CD4-positive, alpha-beta memory T cell (primary cell): ENCODE measurements at regions of chr22 and their contacts with region 1.

Region 1: GRCh38 chr22:40645579-40646197 is 9.2 kb upstream of the MRTFA start:
- DNase-seq: no peak
- H3K4me3 ChIP-seq: no peak overlapping the region
- H3K4me3 Mint-ChIP-seq: peak overlapping the region in 1 of 8 donors; percentile 65
- H3K27ac ChIP-seq: no peak overlapping the region
- H3K27ac Mint-ChIP-seq: peak overlapping the region in 1 of 7 donors; percentile 27
- H3K4me1 ChIP-seq: peaks cover 7% of the 10 kb centered on the region
- H3K4me1 Mint-ChIP-seq: peaks cover 6 to 12% (median 7%) of the 10 kb centered on the region in 4 donors
- H3K27me3 ChIP-seq: no peaks in the 10 kb centered on the region
- H3K27me3 Mint-ChIP-seq: no peaks in the 10 kb centered on the region

Region 2: DNA sequence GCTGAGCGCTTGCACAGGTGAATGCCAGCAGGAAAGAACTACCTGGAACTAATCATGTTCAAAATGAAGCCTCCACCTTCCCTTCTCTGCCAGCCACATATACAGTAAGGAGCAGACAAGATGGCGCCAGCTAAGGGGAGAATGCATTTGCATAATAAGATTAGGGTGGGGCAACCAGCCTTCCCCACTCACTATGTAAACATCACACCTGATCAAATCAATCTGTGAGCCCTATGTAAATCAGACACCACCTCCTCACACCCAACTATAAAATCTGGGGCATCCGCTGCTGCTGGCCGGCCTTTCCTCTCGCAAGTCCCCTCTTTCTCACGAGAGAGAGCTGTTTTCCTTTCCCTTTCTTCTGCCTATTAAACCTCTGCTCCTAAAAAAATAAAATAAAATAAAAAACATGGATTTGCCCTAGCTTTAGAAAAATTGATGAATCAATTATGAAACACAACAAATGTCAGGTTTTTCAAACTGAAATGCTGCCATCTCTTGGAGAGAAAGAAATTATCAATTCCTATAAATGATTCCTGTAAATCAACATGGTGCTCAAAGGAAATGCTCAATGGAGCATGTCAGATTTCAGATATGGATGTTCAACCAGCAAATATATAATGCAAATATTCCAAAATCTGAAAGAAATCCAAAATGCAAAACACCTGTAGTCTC is 166.4 kb before region 1 on chr22:
- CTCF ChIA-PET with region 1: interaction called, 11 read pairs
- POLR2A ChIA-PET with region 1: no interaction called
- intact Hi-C with region 1: no loop called
- DNase-seq: no peak
- H3K4me3 ChIP-seq: no peak overlapping the region
- H3K4me3 Mint-ChIP-seq: no peak overlapping the region
- H3K27ac ChIP-seq: no peak overlapping the region
- H3K27ac Mint-ChIP-seq: no peak overlapping the region
- H3K4me1 ChIP-seq: peaks cover 28% of the 10 kb centered on the region
- H3K4me1 Mint-ChIP-seq: peaks cover 14 to 39% (median 24%) of the 10 kb centered on the region in 4 donors
- H3K27me3 ChIP-seq: no peaks in the 10 kb centered on the region
- H3K27me3 Mint-ChIP-seq: no peaks in the 10 kb centered on the region

Region 3: DNA sequence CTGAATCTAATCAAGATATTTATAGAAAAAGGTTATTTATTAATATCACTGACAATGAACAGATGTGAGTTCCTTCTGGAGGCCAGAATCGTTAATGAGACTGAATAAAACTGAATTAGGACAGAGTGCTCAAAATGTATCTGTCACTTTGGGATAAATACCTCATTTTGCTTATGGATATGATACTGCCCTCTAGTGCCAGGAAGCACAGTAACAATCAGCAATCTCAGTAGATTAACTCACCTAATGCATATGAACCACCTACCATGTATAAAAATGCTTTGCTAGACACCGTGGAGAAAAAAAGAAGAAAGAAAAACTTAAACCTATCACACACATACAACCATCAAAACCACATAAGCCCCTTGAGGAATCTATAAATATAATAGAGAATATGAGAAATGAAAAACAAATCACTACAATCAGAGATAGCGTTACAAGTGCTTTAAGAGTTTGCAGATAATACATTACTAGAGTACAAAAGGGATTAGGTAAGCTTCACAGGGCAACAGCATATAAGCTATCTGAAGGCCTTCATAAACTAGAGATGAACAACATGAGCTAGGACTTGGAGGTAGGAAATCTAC is 157.9 kb before region 1 on chr22:
- CTCF ChIA-PET with region 1: interaction called, 30 read pairs
- POLR2A ChIA-PET with region 1: no interaction called
- intact Hi-C with region 1: loop called (anchors 1 kb)
- DNase-seq: peak in 4 of 5 donors; percentile 33 to 45 (median 42)
- H3K4me3 ChIP-seq: no peak overlapping the region
- H3K4me3 Mint-ChIP-seq: no peak overlapping the region
- H3K27ac ChIP-seq: no peak overlapping the region
- H3K27ac Mint-ChIP-seq: peak overlapping the region in 2 of 7 donors; percentile 7 to 48
- H3K4me1 ChIP-seq: peaks cover 30% of the 10 kb centered on the region
- H3K4me1 Mint-ChIP-seq: peaks cover 26 to 34% (median 33%) of the 10 kb centered on the region in 4 donors
- H3K27me3 ChIP-seq: no peaks in the 10 kb centered on the region
- H3K27me3 Mint-ChIP-seq: no peaks in the 10 kb centered on the region

Region 4: DNA sequence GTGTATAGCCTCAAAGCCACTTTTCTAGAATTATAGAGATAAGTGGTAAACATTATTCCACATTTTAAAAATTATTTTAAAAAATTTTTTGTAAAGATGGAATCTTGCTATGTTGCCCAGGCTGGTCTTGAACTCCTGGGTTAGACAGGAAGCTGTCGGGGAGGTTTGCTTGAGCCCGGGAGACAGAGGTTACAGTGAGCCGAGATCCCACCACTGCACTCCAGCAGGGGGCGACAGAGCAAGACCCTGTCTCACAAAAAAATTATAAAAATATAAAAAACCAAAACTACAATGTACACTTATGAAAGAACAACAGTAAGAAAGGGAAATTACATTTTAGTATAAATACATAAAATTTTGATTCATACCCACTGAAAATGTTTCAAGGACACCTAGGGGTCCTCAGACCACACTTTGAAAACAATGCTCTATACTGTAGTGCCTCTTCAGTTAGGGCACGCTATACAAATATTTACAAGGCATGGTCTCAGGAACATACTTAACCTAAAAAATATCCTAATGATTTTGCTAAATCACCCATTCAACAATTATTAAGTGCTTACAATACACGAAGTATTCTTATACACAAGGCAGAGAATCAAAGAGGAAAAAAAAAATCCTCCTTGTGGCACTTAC is 120.3 kb before region 1 on chr22:
- CTCF ChIA-PET with region 1: interaction called, 172 read pairs
- POLR2A ChIA-PET with region 1: interaction called, 7 read pairs
- intact Hi-C with region 1: loop called (anchors 1 kb)
- DNase-seq: peak; percentile 68 to 73 (median 69)
- H3K4me3 ChIP-seq: no peak overlapping the region
- H3K4me3 Mint-ChIP-seq: no peak overlapping the region
- H3K27ac ChIP-seq: no peak overlapping the region
- H3K27ac Mint-ChIP-seq: peak overlapping the region in 5 of 7 donors; percentile 16 to 87 (median 63)
- H3K4me1 ChIP-seq: peaks cover 22% of the 10 kb centered on the region
- H3K4me1 Mint-ChIP-seq: peaks cover 23 to 46% (median 31%) of the 10 kb centered on the region in 4 donors
- H3K27me3 ChIP-seq: no peaks in the 10 kb centered on the region
- H3K27me3 Mint-ChIP-seq: no peaks in the 10 kb centered on the region

Region 5: GRCh38 chr22:40533712-40534378 is 111.8 kb before region 1 on chr22:
- CTCF ChIA-PET with region 1: interaction called, 92 read pairs
- POLR2A ChIA-PET with region 1: interaction called, 7 read pairs
- intact Hi-C with region 1: loop called (anchors 2 kb)
- DNase-seq: peak; percentile 71 to 83 (median 77)
- H3K4me3 ChIP-seq: peak overlapping the region; percentile 32 to 61
- H3K4me3 Mint-ChIP-seq: peak overlapping the region; percentile 81 to 93 (median 87)
- H3K27ac ChIP-seq: peak overlapping the region; percentile 50
- H3K27ac Mint-ChIP-seq: peak overlapping the region; percentile 86 to 94 (median 92)
- H3K4me1 ChIP-seq: peaks cover 67% of the 10 kb centered on the region
- H3K4me1 Mint-ChIP-seq: peaks cover 49 to 64% (median 60%) of the 10 kb centered on the region in 4 donors
- H3K27me3 ChIP-seq: no peaks in the 10 kb centered on the region
- H3K27me3 Mint-ChIP-seq: no peaks in the 10 kb centered on the region

Region 6: GRCh38 chr22:40610329-40610850 is 35.3 kb before region 1 on chr22:
- CTCF ChIA-PET with region 1: interaction called, 13 read pairs
- POLR2A ChIA-PET with region 1: no interaction called
- intact Hi-C with region 1: no loop called
- DNase-seq: no peak
- H3K4me3 ChIP-seq: no peak overlapping the region
- H3K4me3 Mint-ChIP-seq: no peak overlapping the region
- H3K27ac ChIP-seq: no peak overlapping the region
- H3K27ac Mint-ChIP-seq: peak overlapping the region in 2 of 7 donors; percentile 22 to 29
- H3K4me1 ChIP-seq: peaks cover 22% of the 10 kb centered on the region
- H3K4me1 Mint-ChIP-seq: peaks cover 30 to 58% (median 42%) of the 10 kb centered on the region in 4 donors
- H3K27me3 ChIP-seq: no peaks in the 10 kb centered on the region
- H3K27me3 Mint-ChIP-seq: no peaks in the 10 kb centered on the region

Region 7: GRCh38 chr22:40721266-40721665 is 75.6 kb after region 1 on chr22:
- CTCF ChIA-PET with region 1: no interaction called
- POLR2A ChIA-PET with region 1: no interaction called
- intact Hi-C with region 1: no loop called
- DNase-seq: no peak
- H3K4me3 ChIP-seq: no peak overlapping the region
- H3K4me3 Mint-ChIP-seq: no peak overlapping the region
- H3K27ac ChIP-seq: no peak overlapping the region
- H3K27ac Mint-ChIP-seq: peak overlapping the region in 1 of 7 donors; percentile 43
- H3K4me1 ChIP-seq: peaks cover 4% of the 10 kb centered on the region
- H3K4me1 Mint-ChIP-seq: peaks cover 5 to 12% (median 11%) of the 10 kb centered on the region in 4 donors
- H3K27me3 ChIP-seq: no peaks in the 10 kb centered on the region
- H3K27me3 Mint-ChIP-seq: no peaks in the 10 kb centered on the region

Region 8: GRCh38 chr22:40757071-40757470 is 111.4 kb after region 1 on chr22:
- CTCF ChIA-PET with region 1: interaction called, 10 read pairs
- POLR2A ChIA-PET with region 1: no interaction called
- intact Hi-C with region 1: no loop called
- DNase-seq: no peak
- H3K4me3 ChIP-seq: no peak overlapping the region
- H3K4me3 Mint-ChIP-seq: no peak overlapping the region
- H3K27ac ChIP-seq: no peak overlapping the region
- H3K27ac Mint-ChIP-seq: no peak overlapping the region
- H3K4me1 ChIP-seq: no peaks in the 10 kb centered on the region
- H3K4me1 Mint-ChIP-seq: peaks cover 0 to 1% (median 0%) of the 10 kb centered on the region in 4 donors
- H3K27me3 ChIP-seq: no peaks in the 10 kb centered on the region
- H3K27me3 Mint-ChIP-seq: no peaks in the 10 kb centered on the region

Region 9: DNA sequence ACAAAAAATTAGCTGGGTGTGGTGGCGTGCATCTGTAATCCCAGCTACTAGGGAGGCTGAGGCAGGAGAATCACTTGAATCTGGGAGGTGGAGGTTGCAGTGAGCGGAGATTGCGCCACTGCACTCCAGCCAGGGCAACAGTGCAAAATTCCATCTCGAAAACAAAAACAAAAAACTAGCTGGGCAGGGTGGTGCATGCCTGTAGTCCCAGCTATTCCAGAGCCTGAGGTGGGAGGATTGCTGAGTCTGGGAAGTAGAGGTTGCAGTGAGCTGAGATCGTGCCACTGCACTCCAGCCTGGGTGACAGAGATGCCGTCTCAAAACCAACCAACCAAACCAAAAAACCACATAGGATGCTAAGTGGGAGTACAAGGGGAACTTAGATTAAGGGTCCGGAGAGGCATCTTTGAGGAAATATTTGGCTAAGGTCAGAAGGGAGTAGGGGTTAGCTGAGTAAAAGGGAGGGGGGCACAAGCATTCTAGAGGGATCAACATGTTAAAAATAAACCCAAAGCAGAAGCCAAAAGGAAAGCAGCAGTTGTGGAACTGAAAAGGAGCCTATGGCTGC is 812.6 kb after region 1 on chr22:
- CTCF ChIA-PET with region 1: no interaction called
- POLR2A ChIA-PET with region 1: no interaction called
- intact Hi-C with region 1: no loop called
- DNase-seq: no peak
- H3K4me3 ChIP-seq: no peak overlapping the region
- H3K4me3 Mint-ChIP-seq: no peak overlapping the region
- H3K27ac ChIP-seq: no peak overlapping the region
- H3K27ac Mint-ChIP-seq: peak overlapping the region in 4 of 7 donors; percentile 10 to 58 (median 56)
- H3K4me1 ChIP-seq: no peaks in the 10 kb centered on the region
- H3K4me1 Mint-ChIP-seq: peaks cover 0 to 3% (median under 1%) of the 10 kb centered on the region in 4 donors
- H3K27me3 ChIP-seq: no peaks in the 10 kb centered on the region
- H3K27me3 Mint-ChIP-seq: no peaks in the 10 kb centered on the region